Activated naive CD4-positive, alpha-beta T cell treated with anti-CD3 and anti-CD28 coated beads for 36 hours (primary cell): ENCODE measurements at regions of chr2 and their contacts with region 1.

Region 1: GRCh38 chr2:203909261-203909967 is 27.1 kb upstream of the ICOS start:
- DNase-seq: peak; percentile 53
- H3K4me3 Mint-ChIP-seq: no peak overlapping the region
- H3K27ac Mint-ChIP-seq: peak overlapping the region; percentile 34
- H3K4me1 Mint-ChIP-seq: peaks cover 22% of the 10 kb centered on the region
- H3K27me3 Mint-ChIP-seq: no peaks in the 10 kb centered on the region

Region 2: DNA sequence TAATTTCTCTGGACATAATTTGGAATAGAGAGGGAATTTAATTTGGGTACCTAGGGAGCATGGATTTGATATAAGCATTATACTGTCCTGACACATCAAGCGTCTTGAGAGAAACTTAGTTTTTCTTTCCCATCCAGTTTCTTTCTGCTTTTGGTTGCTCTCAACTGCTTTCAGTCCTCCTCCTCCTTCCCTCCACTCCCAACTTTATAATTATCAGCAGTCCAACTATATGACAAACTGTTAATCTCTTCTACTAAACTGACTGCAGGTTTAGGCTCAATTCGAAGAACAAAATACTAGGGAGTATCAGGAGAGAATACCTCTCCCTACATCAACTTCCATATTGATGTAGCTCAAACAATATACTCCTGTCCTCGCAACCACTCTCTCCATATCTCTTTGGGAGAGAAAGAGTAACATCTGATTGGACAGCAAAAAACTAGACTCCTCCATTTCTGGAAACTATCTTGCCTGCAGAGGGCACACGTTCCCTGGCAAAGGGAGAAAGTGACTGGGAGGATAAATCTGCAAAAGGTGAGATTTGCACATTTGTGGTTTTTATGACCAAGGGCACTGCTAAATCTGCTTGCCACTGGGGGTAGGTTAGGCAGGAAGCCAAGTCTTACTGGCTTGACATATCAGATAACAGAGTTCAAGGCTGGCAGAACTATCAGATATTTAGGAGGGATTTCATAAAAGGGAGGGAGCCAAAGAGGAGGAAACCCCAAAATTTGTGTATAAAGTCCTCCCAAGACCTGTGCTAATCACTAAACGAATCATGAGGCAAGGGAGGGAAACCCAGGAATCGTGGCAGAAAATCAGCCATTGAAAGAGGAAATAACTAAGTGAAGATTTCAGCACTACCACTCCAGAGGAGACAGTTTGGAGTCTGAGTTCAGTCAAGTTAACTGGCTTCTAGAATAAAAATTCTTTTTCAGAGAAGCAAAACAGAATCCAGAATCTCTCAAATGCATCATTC is 1077.9 kb before region 1 on chr2:
- CTCF ChIA-PET with region 1: no interaction called
- intact Hi-C with region 1: loop called (anchors 1 kb)
- DNase-seq: peak; percentile 80
- H3K4me3 Mint-ChIP-seq: no peak overlapping the region
- H3K27ac Mint-ChIP-seq: no peak overlapping the region
- H3K4me1 Mint-ChIP-seq: peaks cover 10% of the 10 kb centered on the region
- H3K27me3 Mint-ChIP-seq: no peaks in the 10 kb centered on the region

Region 3: GRCh38 chr2:203484266-203485112 is 424.9 kb before region 1 on chr2:
- CTCF ChIA-PET with region 1: interaction called, 7 read pairs
- intact Hi-C with region 1: loop called (anchors 1 kb)
- DNase-seq: peak; percentile 68
- H3K4me3 Mint-ChIP-seq: no peak overlapping the region
- H3K27ac Mint-ChIP-seq: no peak overlapping the region
- H3K4me1 Mint-ChIP-seq: peaks cover 9% of the 10 kb centered on the region
- H3K27me3 Mint-ChIP-seq: no peaks in the 10 kb centered on the region

Region 4: GRCh38 chr2:203824057-203824456 is 85.4 kb before region 1 on chr2:
- CTCF ChIA-PET with region 1: interaction called, 5 read pairs
- intact Hi-C with region 1: loop called (anchors 2 kb)
- DNase-seq: peak; percentile 41
- H3K4me3 Mint-ChIP-seq: no peak overlapping the region
- H3K27ac Mint-ChIP-seq: no peak overlapping the region
- H3K4me1 Mint-ChIP-seq: peaks cover 33% of the 10 kb centered on the region
- H3K27me3 Mint-ChIP-seq: no peaks in the 10 kb centered on the region

Region 5: GRCh38 chr2:203871371-203871983 is 37.9 kb before region 1 on chr2:
- CTCF ChIA-PET with region 1: interaction called, 28 read pairs
- intact Hi-C with region 1: loop called (anchors 1 kb)
- DNase-seq: peak; percentile 69
- H3K4me3 Mint-ChIP-seq: peak overlapping the region; percentile 92
- H3K27ac Mint-ChIP-seq: peak overlapping the region; percentile 99
- H3K4me1 Mint-ChIP-seq: peaks cover 55% of the 10 kb centered on the region
- H3K27me3 Mint-ChIP-seq: no peaks in the 10 kb centered on the region

Region 6: GRCh38 chr2:203893401-203893800 is 16.0 kb before region 1 on chr2:
- CTCF ChIA-PET with region 1: interaction called, 15 read pairs
- intact Hi-C with region 1: no loop called
- DNase-seq: no peak
- H3K4me3 Mint-ChIP-seq: no peak overlapping the region
- H3K27ac Mint-ChIP-seq: no peak overlapping the region
- H3K4me1 Mint-ChIP-seq: peaks cover 67% of the 10 kb centered on the region
- H3K27me3 Mint-ChIP-seq: no peaks in the 10 kb centered on the region

Region 7: DNA sequence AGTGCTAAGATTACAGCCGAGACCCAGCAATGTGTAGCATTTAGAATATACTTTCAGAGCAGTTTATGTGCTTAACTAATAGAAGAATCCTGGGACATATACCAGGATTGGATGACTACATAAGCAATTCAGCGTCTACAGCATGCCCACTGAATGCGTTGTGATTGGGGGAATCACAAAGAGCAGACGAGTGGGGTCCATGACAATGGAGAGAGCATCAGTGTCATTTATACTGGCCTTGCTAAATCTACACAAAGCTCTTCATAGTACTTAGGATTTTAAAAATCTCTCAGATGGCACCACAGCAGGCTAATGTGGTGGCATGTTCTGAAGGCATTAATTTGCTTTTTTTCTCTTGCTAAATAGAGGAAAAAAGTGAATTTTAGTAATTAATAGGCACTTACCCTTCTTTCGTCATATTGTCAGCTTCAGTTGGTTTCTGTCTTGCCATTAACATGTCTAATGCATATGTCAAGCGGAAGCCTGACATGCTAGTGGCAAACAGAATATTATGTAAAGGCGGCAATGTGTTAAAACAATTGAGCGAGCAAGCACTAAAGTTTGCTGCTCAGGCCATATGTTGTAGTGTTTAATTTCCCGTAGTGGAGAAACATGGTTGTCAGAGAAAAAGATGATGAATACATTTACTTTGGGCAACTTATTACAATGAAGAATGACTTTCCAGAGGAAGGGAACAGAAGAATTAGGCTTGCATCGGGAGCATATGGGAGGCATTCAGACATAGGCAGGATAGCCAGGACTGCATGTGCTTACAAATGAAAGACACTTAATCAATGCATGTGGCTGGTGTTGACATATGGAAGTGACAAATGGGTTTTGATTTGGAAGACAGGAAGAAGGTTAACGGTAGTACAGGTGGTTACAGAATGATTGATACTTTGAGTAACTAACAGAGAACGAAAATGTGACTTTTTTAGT is 172.3 kb after region 1 on chr2:
- CTCF ChIA-PET with region 1: no interaction called
- intact Hi-C with region 1: no loop called
- DNase-seq: no peak
- H3K4me3 Mint-ChIP-seq: no peak overlapping the region
- H3K27ac Mint-ChIP-seq: no peak overlapping the region
- H3K4me1 Mint-ChIP-seq: peaks cover 5% of the 10 kb centered on the region
- H3K27me3 Mint-ChIP-seq: no peaks in the 10 kb centered on the region